GM12878 (cell line): ENCODE measurements at regions of chr7 and their contacts with region 1.

Region 1: GRCh38 chr7:65981965-65982792 is at the start of gene GUSB:
- DNase-seq: peak; percentile 51
- ATAC-seq: peak; percentile 91
- H3K4me3 ChIP-seq: peak within 1 kb of the TSS; percentile 73
- H3K27ac ChIP-seq: peak within 1 kb of the TSS; percentile 84
- H3K4me1 ChIP-seq: no peaks in the 10 kb centered on the region; the same call in 1 of the 2 replicates
- H3K27me3 ChIP-seq: no peaks in the 10 kb centered on the region
- CTCF ChIP-seq: no peak
- EP300 ChIP-seq: no peak
- POLR2A ChIP-seq: peak; percentile 92
- RAD21 ChIP-seq: no peak
- polyA plus RNA-seq, gene GUSB: 9.8 to 19.6 TPM

Region 2: DNA sequence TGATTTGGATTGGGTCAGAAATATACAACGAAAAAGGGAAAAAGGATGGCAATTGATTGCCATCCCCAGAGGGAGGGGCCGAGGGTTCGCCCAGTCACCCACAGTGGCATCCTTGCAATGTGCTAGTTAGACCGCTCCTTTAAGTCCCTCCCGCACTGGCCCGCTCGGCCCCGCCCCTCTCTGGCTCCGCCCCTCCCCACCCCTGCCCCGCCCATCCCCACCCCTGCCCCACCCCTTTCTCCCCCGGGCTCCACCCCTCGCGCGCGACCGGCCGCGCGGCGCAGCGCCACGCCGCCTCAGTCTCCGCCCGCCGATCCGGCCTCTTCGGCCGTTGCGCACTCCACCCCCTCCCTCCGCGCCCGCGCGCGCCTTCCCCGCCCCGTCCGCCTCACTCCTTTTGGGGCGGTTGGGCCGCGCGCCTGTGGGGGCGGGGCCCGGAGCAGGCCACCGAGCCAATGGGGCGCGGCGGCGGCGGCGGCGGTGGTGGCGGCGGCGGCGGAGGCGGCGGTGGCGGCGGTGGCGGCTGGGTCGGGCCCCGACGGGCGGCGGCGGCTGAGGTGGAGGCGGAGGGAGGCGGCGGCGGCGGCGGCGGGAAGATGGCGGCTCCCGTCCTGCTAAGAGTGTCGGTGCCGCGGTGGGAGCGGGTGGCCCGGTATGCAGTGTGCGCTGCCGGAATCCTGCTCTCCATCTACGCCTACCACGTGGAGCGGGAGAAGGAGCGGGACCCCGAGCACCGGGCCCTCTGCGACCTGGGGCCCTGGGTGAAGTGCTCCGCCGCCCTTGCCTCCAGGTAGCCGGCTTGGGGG is 109.2 kb before region 1 on chr7 and contains the start of gene VKORC1L1:
- CTCF ChIA-PET with region 1: no interaction called
- POLR2A ChIA-PET with region 1: no interaction called
- RAD21 ChIA-PET with region 1: no interaction called
- SMC1A ChIA-PET with region 1: no interaction called
- in situ Hi-C with region 1: no loop called
- intact Hi-C with region 1: loop called (anchors 10 kb)
- DNase-seq: peak; percentile 52
- ATAC-seq: peak; percentile 93
- H3K4me3 ChIP-seq: peak within 1 kb of the TSS; percentile 94
- H3K27ac ChIP-seq: peak within 1 kb of the TSS; percentile 58
- H3K4me1 ChIP-seq: no peaks in the 10 kb centered on the region
- H3K27me3 ChIP-seq: no peaks in the 10 kb centered on the region
- CTCF ChIP-seq: no peak
- EP300 ChIP-seq: no peak
- POLR2A ChIP-seq: peak; percentile 63; the same call in 1 of the 2 replicates
- RAD21 ChIP-seq: no peak
- polyA plus RNA-seq, gene VKORC1L1: 3.3 to 4.7 TPM

Region 3: DNA sequence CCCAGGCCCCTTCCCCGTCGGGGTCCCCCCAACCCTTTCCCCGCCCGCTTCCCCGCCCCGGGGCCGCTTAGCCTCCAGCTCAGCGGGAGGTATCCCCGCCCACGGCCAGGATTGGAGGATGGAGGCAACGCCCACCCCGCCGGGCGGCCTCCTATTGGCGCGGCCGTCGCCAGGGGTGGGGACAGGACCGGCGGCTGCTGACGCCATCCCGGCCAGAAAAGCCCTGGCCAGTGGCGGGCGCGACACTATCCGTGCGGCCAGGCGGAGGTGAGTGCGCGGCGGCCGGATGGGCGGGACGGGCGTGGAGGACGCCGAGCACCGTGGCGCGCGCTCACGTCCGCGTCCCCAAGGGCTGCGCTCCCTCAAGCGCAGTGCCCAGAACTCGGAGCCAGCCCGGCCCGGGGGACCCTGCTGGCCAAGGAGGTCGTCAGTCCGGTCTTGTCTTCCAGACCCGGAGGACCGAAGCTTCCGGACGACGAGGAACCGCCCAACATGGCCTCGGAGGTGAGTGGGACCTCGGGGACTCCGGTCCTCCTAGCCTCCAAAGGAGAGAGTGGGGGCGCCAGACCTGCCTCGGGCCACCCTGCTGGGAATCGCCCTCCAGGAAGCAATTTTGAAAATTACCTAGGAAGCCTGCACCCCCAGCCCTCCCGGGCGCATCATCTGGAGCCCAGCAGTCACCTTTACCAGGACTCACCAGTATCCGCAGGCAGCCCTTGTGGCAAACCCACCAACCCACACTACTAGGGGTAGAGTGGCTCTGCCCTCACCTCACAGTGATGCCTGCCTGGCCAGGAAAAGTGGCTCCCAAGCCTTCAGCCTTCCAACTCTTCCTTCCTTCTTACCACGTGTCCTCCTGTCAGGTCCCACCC is 93.6 kb after region 1 on chr7 and contains the start of gene ASL:
- CTCF ChIA-PET with region 1: no interaction called
- POLR2A ChIA-PET with region 1: no interaction called
- RAD21 ChIA-PET with region 1: no interaction called
- SMC1A ChIA-PET with region 1: no interaction called
- in situ Hi-C with region 1: no loop called
- intact Hi-C with region 1: loop called (anchors 5 kb)
- DNase-seq: peak; percentile 66
- ATAC-seq: peak; percentile 99
- H3K4me3 ChIP-seq: peak within 1 kb of the TSS; percentile 84
- H3K27ac ChIP-seq: peak within 1 kb of the TSS; percentile 69; the same call in 1 of the 2 replicates
- H3K4me1 ChIP-seq: peaks cover 11% of the 10 kb centered on the region
- H3K27me3 ChIP-seq: no peaks in the 10 kb centered on the region
- CTCF ChIP-seq: no peak; a peak in 1 of 6 replicates
- EP300 ChIP-seq: no peak
- POLR2A ChIP-seq: peak; percentile 98
- RAD21 ChIP-seq: no peak
- polyA plus RNA-seq, gene ASL: 0.66 to 7.1 TPM